SK-N-SH (cell line): ENCODE measurements at regions of chr6 and their contacts with region 1.

Region 1: DNA sequence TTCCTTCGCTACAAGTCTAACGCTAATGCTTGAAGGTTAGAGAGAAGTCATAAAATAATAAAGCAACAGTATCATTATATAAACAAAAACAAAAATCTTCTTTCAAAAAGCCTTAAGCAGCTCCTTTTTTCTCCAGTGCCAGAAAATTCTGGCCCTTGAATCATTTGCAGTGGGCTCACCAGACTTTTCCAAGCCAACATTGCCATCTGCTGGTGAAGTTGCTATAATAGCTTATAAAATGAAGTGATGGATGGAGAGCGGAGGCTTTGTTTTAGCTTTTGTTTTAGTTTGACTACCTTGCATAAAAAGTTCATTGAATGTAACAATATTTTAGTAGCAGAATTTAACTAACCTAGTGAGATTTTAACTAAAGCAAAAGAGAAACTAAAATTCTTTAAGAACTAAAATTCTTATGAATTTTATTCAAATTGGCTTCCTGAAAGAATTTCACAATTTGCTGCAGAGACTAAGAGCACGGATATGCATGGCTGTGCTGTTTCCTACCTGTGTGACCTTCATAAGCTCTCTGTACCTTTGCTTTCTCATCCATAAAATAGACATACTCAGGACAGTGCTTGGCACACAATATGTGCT is 44.8 kb upstream of the SLC2A12 start:
- DNase-seq: peak; percentile 69
- H3K4me3 ChIP-seq: no peak overlapping the region; a peak in 1 of 4 replicates
- H3K27ac ChIP-seq: no peak overlapping the region
- H3K4me1 ChIP-seq: peaks cover 0 to 11% of the 10 kb centered on the region in 2 experiments; a peak in 2 of 4 replicates
- H3K27me3 ChIP-seq: peaks cover 10% of the 10 kb centered on the region; the same call in 1 of the 2 replicates
- CTCF ChIP-seq: peak; percentile 81
- EP300 ChIP-seq: no peak
- RAD21 ChIP-seq: peak; percentile 95

Region 2: GRCh38 chr6:133568970-133569889 is 528.0 kb before region 1 on chr6:
- CTCF ChIA-PET with region 1: interaction called, 15 read pairs
- POLR2A ChIA-PET with region 1: no interaction called
- DNase-seq: peak; percentile 50
- H3K4me3 ChIP-seq: peak overlapping the region; percentile 35 to 52; a peak in 3 of 4 replicates
- H3K27ac ChIP-seq: no peak overlapping the region
- H3K4me1 ChIP-seq: peaks cover 0 to 5% of the 10 kb centered on the region in 2 experiments; a peak in 2 of 4 replicates
- H3K27me3 ChIP-seq: peaks cover 13% of the 10 kb centered on the region; the same call in 1 of the 2 replicates
- CTCF ChIP-seq: peak; percentile 95
- EP300 ChIP-seq: no peak
- RAD21 ChIP-seq: peak; percentile 61

Region 3: GRCh38 chr6:133939778-133940667 is 157.2 kb before region 1 on chr6:
- CTCF ChIA-PET with region 1: interaction called, 15 read pairs
- POLR2A ChIA-PET with region 1: no interaction called
- DNase-seq: no peak
- H3K4me3 ChIP-seq: no peak overlapping the region
- H3K27ac ChIP-seq: no peak overlapping the region
- H3K4me1 ChIP-seq: no peaks in the 10 kb centered on the region
- H3K27me3 ChIP-seq: peaks cover 4% of the 10 kb centered on the region; the same call in 1 of the 2 replicates
- CTCF ChIP-seq: no peak
- EP300 ChIP-seq: no peak
- RAD21 ChIP-seq: no peak

Region 4: DNA sequence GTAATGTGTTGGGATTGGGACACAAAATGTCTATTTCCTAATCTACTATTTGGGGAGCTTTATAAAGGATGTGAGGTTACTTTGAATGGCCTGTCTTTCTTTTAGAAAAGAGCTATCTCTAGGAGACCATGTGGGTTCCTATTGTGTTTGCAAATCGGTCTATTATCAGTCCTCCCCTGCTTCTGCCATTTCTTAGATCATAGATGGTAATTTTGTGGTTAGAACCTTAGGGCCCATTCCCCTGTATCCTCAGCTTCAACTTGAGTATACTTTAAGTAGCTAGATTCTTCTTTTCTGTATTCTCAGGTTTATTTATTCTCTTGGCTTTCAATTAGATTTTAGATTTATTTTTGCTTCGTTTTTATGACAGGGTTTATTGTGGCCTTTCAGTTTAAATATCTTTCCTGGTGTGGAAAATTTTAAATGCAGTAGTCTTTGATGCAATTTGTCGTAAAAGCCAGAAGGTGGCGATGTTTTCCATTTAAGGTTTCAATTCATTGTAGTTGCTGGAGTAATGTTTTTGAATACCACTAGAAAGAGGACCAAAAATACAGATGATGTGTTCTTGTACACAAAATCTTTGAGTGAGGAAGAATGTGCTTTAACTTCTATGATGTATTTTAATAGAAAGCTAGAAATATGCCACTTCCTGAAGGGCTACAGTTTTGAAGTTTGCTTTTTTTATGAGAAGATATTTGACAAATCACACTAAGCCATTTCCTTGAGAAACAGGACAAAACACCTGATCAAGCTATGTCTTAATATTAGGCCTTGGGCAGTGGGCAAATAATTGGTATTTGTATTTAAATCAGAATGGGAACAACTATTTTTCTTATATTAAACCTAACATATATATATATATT is 123.9 kb before region 1 on chr6:
- CTCF ChIA-PET with region 1: interaction called, 38 read pairs
- POLR2A ChIA-PET with region 1: no interaction called
- DNase-seq: peak; percentile 47
- H3K4me3 ChIP-seq: no peak overlapping the region
- H3K27ac ChIP-seq: peak overlapping the region in 1 of 2 experiments; percentile 1; a peak in 1 of 4 replicates
- H3K4me1 ChIP-seq: peaks cover 6 to 19% of the 10 kb centered on the region in 2 experiments; a peak in 2 of 4 replicates
- H3K27me3 ChIP-seq: no peaks in the 10 kb centered on the region
- CTCF ChIP-seq: peak; percentile 85
- EP300 ChIP-seq: no peak
- RAD21 ChIP-seq: peak; percentile 74

Region 5: DNA sequence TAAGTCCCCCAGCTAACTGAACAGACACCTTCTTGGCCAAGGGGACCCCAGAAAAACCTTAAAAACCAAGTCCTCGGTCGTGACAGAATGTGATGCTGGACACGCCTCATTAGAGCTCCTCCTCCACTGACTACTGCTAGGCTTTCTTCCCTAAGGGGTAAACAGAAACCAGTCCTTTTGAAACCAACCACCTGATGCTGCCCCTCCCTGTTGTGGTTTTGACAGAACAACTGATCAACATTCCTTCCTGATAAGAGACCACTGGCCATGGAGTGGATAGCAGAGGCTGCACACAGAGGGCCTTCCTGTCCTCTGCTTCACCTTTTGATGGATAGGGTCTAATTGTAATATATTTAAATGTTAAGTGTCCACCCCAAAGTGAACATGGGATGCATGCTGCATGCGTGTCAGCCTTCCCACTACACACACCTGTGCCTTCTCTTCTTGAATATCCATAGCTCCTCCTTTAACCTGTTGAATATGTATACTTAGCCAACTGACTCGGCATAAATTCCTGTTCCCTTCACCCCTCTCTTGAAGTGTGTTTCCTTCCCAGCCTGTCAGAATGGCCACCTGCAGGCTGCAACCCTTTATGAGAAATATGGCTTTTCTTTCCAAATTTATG is 16.9 kb before region 1 on chr6:
- CTCF ChIA-PET with region 1: interaction called, 25 read pairs
- POLR2A ChIA-PET with region 1: no interaction called
- DNase-seq: no peak
- H3K4me3 ChIP-seq: no peak overlapping the region
- H3K27ac ChIP-seq: no peak overlapping the region
- H3K4me1 ChIP-seq: no peaks in the 10 kb centered on the region
- H3K27me3 ChIP-seq: no peaks in the 10 kb centered on the region; the same call in 1 of the 2 replicates
- CTCF ChIP-seq: no peak
- EP300 ChIP-seq: no peak
- RAD21 ChIP-seq: no peak

Region 6: DNA sequence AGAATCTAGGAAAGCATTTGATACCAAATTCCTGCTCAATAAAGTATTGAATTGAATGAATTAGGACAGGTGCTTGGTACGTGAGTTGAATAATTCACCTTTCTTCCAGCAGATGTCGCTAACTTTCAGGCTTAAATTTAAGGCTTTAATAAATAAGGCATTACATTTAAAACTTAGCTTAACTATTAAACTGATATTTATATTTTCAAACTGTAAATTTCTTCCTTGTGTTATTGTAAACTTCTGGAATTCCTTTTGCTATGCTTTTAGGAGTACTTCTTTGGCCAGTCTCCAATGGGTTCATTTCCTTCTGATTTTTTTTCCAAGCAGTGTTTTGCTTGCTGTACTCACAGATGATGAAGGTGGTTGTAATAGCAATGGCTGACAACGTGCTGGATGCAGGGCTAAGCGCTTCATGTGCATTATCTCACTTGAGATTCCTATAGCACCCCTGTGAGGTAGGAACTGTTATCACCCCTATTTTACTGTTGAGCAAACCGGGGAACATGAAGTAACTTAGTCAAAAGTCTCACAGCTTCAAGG is 26.5 kb after region 1 on chr6:
- CTCF ChIA-PET with region 1: interaction called, 31 read pairs
- POLR2A ChIA-PET with region 1: no interaction called
- DNase-seq: peak; percentile 53
- H3K4me3 ChIP-seq: no peak overlapping the region; a peak in 1 of 4 replicates
- H3K27ac ChIP-seq: no peak overlapping the region
- H3K4me1 ChIP-seq: no peaks in the 10 kb centered on the region
- H3K27me3 ChIP-seq: no peaks in the 10 kb centered on the region
- CTCF ChIP-seq: peak; percentile 86
- EP300 ChIP-seq: no peak
- RAD21 ChIP-seq: peak; percentile 58